ENCODE measurements at regions of chr9 and their contacts with region 1.

Region 1: GRCh38 chr9:78296893-78297671 is at the start of gene PSAT1:
- DNase-seq: peak; percentile 90 to 94
- ATAC-seq: peak; percentile 97
- H3K4me3 ChIP-seq: peak within 1 kb of the TSS; percentile 27 to 41
- H3K27ac ChIP-seq: no peak within 1 kb of the TSS
- H3K4me1 ChIP-seq: no peaks in the 10 kb centered on the region
- H3K27me3 ChIP-seq: no peaks in the 10 kb centered on the region
- total RNA-seq, gene PSAT1: 1.7 to 4.1 TPM

Region 2: DNA sequence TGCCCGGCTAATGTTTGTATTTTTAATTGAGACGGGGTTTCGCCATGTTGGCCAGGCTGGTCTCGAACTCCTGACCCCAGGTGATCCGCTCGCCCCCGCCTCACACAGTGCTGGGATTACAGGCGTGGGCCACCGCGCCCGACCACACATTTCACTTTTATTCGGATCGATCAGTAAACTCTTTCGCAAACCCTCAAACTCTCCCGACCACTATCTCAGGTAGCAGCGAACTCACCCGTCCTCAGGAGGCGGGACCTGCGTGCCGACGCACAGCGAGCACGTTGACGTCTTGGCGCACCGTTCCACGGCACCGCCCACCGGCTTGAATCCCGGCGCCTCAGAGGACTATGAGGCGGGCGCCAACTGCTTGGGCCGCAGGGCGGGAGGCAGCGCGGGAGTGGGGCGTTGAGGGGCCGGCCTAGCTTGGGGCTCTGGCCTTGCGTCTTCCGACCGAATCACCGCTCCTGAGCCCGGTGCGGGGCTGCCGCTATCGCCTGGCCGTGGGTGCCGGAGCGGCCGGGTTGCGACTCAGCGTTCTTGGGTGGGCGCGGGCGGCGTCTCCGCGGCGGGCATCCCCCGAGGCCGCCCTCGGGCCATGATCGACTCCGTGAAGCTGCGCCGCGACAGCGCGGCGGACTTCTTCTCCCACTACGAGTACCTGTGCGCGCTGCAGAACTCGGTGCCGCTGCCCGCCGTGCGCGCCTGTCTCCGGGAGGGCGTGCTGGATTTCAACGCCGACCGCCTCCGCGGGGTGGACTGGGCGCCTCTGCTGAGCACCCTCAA is 61.1 kb before region 1 on chr9 and contains the start of gene CEP78:
- intact Hi-C with region 1: loop called in 1 of 2 experiments (anchors 5 kb)
- DNase-seq: peak; percentile 94 to 96
- ATAC-seq: peak; percentile 95
- H3K4me3 ChIP-seq: peak within 1 kb of the TSS; percentile 31 to 32
- H3K27ac ChIP-seq: no peak within 1 kb of the TSS
- H3K4me1 ChIP-seq: no peaks in the 10 kb centered on the region
- H3K27me3 ChIP-seq: no peaks in the 10 kb centered on the region
- total RNA-seq, gene CEP78: 9.6 to 14.7 TPM

Region 3: DNA sequence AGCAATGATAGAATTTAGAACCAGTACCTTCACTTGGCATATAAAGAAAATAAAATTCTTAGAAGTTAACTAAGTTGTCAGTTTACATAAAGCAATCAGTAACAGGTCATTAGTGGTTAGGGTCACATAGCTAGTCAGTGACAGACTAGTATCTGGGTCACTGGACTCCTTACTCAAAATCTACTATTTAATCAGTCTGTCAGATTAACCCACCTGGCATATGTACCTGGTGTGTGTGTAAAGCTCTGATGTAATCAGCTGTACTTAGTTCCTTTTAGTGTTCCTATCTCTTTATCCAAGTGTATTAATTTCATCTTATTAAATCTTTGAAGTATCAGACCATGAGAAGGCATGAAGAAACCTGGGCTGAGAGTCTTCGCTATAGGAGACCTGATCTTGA is 54.0 kb before region 1 on chr9:
- intact Hi-C with region 1: loop called (anchors 1 to 5 kb)
- DNase-seq: no peak
- ATAC-seq: no peak
- H3K4me3 ChIP-seq: no peak overlapping the region
- H3K27ac ChIP-seq: no peak overlapping the region
- H3K4me1 ChIP-seq: no peaks in the 10 kb centered on the region
- H3K27me3 ChIP-seq: no peaks in the 10 kb centered on the region

Measured in aorta (tissue), 5 donors.